Breast epithelium (tissue), 4 donors: ENCODE measurements at regions of chr10 and their contacts with region 1.

Region 1: DNA sequence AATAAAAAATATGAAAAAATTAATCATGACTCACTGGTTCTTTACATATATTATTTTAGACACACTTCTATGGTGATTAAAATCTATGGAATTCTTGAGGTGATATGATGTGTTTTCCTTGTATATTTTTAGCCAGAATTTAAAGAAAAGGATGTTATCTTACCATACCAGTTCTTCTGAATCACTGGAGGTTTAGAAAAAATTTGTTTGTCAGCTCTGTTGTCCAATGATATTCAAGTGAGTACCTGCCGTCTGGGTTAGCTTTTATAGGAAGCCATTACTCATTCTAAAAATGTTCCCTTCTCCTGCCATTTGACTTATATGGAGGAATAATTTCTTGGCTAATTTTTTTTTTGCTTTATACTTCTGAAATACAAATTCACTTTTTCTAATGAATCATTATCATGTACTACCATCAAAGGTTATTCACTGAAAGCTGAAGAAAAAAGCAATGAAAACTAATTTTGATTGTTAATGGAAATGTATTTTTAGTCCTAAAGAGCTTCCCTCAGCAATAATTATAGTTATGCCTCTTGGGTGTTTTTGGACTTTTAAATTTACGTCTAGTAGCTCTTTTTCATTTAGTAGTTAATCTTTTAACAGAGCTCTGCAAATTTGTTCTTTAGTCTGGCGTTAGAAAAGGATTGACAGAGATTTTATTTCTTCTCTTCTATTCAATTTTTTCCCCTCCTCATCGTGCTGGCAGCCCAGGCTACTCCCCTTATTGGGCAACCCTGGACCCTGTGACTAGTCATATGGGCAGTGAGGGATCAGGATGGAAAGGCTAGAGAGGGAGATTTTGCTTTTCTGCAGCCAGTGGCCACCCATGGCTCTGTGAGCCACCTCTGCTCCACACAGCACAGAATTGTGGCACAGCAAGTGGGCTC is 434.2 kb downstream of the LRMDA start:
- DNase-seq: no peak
- H3K4me3 ChIP-seq: no peak overlapping the region
- H3K27ac ChIP-seq: no peak overlapping the region
- H3K4me1 ChIP-seq: no peaks in the 10 kb centered on the region
- H3K27me3 ChIP-seq: no peaks in the 10 kb centered on the region
- CTCF ChIP-seq: no peak
- POLR2A ChIP-seq: no peak

Region 2: DNA sequence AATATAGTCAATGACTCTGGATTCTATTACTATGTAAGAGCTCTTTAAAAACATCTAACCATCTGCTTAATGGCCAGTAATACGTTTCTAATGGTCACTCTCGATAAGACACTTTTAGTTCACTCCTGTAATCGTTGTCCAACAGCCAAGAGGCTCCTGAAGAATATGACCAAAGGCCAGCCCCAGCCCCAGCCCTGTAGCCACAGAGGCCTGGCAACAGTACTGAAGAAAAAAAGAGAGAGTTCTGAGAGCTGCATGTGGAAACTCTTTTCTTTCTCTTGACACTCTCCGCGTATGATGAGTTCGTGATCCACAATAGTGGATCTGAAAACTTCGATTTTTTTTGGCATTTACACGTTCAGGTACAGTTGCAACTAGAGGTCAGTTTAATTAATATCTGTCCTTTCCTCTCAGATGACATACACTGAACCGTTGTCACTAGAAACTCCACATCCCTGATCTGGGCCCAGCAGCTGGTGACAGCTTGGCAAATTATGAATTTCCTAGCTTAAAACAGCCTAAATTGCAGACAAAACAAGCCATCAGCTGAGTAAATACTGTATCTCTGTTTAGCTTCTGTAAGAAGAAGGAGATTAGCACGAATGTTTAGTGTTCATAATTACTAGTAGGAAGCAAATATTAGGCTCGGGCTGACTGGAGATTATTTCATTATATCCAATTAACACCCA is 22.5 kb after region 1 on chr10:
- intact Hi-C with region 1: no loop called
- DNase-seq: no peak
- H3K4me3 ChIP-seq: no peak overlapping the region
- H3K27ac ChIP-seq: peak overlapping the region; percentile 59 to 60
- H3K4me1 ChIP-seq: no peaks in the 10 kb centered on the region
- H3K27me3 ChIP-seq: no peaks in the 10 kb centered on the region
- CTCF ChIP-seq: no peak
- POLR2A ChIP-seq: no peak

Region 3: GRCh38 chr10:75919913-75920312 is 54.3 kb after region 1 on chr10:
- intact Hi-C with region 1: loop called (anchors 2 kb)
- DNase-seq: no peak
- H3K4me3 ChIP-seq: no peak overlapping the region
- H3K27ac ChIP-seq: no peak overlapping the region
- H3K4me1 ChIP-seq: no peaks in the 10 kb centered on the region
- H3K27me3 ChIP-seq: no peaks in the 10 kb centered on the region
- CTCF ChIP-seq: no peak
- POLR2A ChIP-seq: no peak